CD8-positive, alpha-beta T cell (primary cell): ENCODE measurements at regions of chr19 and their contacts with region 1.

Region 1: GRCh38 chr19:49929611-49930482 is 543 bp upstream of the NUP62 start:
- DNase-seq: peak; percentile 83 to 98 (median 91)
- ATAC-seq: peak; percentile 89
- H3K4me3 ChIP-seq: peak overlapping the region; percentile 90 to 100
- H3K4me3 Mint-ChIP-seq: peak overlapping the region; percentile 98
- H3K27ac ChIP-seq: peak overlapping the region; percentile 83 to 97
- H3K27ac Mint-ChIP-seq: peak overlapping the region; percentile 96
- H3K4me1 ChIP-seq: peaks cover 35% of the 10 kb centered on the region
- H3K4me1 Mint-ChIP-seq: peaks cover 65% of the 10 kb centered on the region
- H3K27me3 ChIP-seq: no peaks in the 10 kb centered on the region
- H3K27me3 Mint-ChIP-seq: no peaks in the 10 kb centered on the region
- CTCF ChIP-seq: no peak

Region 2: DNA sequence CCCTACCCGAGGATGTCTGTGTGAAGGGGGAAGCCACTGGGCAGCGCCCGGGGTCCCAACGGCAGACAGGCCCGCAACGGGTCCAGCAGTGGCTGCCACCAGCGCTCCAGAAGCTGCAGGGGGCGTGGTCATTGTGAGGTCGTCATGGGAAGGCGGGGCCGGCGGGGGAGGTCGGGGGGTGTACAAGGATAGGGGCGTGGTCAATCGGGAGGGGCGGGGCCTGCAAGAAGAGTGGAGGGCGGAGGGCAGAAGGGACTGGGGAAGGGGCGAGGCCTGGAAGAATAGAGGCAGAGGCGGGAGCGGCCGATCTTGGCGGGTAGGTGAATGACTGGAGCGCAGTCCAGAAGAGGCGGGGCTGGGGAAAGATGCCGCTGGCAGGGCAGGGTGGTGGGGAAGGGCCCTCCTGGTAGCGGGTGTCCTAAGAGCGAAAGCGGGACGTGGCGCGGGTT is 121.1 kb before region 1 on chr19:
- CTCF ChIA-PET with region 1: no interaction called
- POLR2A ChIA-PET with region 1: no interaction called
- intact Hi-C with region 1: loop called (anchors 1 to 2 kb)
- DNase-seq: peak; percentile 64 to 89 (median 86)
- ATAC-seq: peak; percentile 61
- H3K4me3 ChIP-seq: peak overlapping the region; percentile 59 to 65
- H3K4me3 Mint-ChIP-seq: peak overlapping the region; percentile 84
- H3K27ac ChIP-seq: peak overlapping the region; percentile 44 to 53
- H3K27ac Mint-ChIP-seq: peak overlapping the region; percentile 27
- H3K4me1 ChIP-seq: peaks cover 21% of the 10 kb centered on the region
- H3K4me1 Mint-ChIP-seq: peaks cover 31% of the 10 kb centered on the region
- H3K27me3 ChIP-seq: no peaks in the 10 kb centered on the region
- H3K27me3 Mint-ChIP-seq: no peaks in the 10 kb centered on the region
- CTCF ChIP-seq: no peak

Region 3: GRCh38 chr19:49869441-49870176 is 60.2 kb before region 1 on chr19:
- CTCF ChIA-PET with region 1: no interaction called
- POLR2A ChIA-PET with region 1: no interaction called
- intact Hi-C with region 1: loop called in 1 of 2 experiments (anchors 1 kb)
- DNase-seq: peak; percentile 81 to 98 (median 89)
- ATAC-seq: peak; percentile 75
- H3K4me3 ChIP-seq: peak overlapping the region; percentile 73 to 85
- H3K4me3 Mint-ChIP-seq: no peak overlapping the region
- H3K27ac ChIP-seq: peak overlapping the region; percentile 64 to 96
- H3K27ac Mint-ChIP-seq: no peak overlapping the region
- H3K4me1 ChIP-seq: peaks cover 36% of the 10 kb centered on the region
- H3K4me1 Mint-ChIP-seq: peaks cover 41% of the 10 kb centered on the region
- H3K27me3 ChIP-seq: no peaks in the 10 kb centered on the region
- H3K27me3 Mint-ChIP-seq: no peaks in the 10 kb centered on the region
- CTCF ChIP-seq: no peak

Region 4: GRCh38 chr19:49946418-49946817 is 16.6 kb after region 1 on chr19:
- CTCF ChIA-PET with region 1: no interaction called
- POLR2A ChIA-PET with region 1: no interaction called
- intact Hi-C with region 1: no loop called
- DNase-seq: no peak
- ATAC-seq: no peak
- H3K4me3 ChIP-seq: no peak overlapping the region
- H3K4me3 Mint-ChIP-seq: no peak overlapping the region
- H3K27ac ChIP-seq: no peak overlapping the region
- H3K27ac Mint-ChIP-seq: no peak overlapping the region
- H3K4me1 ChIP-seq: no peaks in the 10 kb centered on the region
- H3K4me1 Mint-ChIP-seq: no peaks in the 10 kb centered on the region
- H3K27me3 ChIP-seq: peaks cover 0 to 2% of the 10 kb centered on the region in 2 experiments
- H3K27me3 Mint-ChIP-seq: peaks cover 26% of the 10 kb centered on the region
- CTCF ChIP-seq: no peak

Region 5: GRCh38 chr19:49983645-49984229 is 53.9 kb after region 1 on chr19:
- CTCF ChIA-PET with region 1: interaction called, 11 read pairs
- POLR2A ChIA-PET with region 1: no interaction called
- intact Hi-C with region 1: no loop called
- DNase-seq: peak; percentile 57 to 85 (median 77)
- ATAC-seq: peak; percentile 67
- H3K4me3 ChIP-seq: no peak overlapping the region
- H3K4me3 Mint-ChIP-seq: no peak overlapping the region
- H3K27ac ChIP-seq: no peak overlapping the region
- H3K27ac Mint-ChIP-seq: no peak overlapping the region
- H3K4me1 ChIP-seq: no peaks in the 10 kb centered on the region
- H3K4me1 Mint-ChIP-seq: no peaks in the 10 kb centered on the region
- H3K27me3 ChIP-seq: no peaks in the 10 kb centered on the region
- H3K27me3 Mint-ChIP-seq: no peaks in the 10 kb centered on the region
- CTCF ChIP-seq: peak; percentile 81

Region 6: GRCh38 chr19:50050384-50051224 is 120.8 kb after region 1 on chr19:
- CTCF ChIA-PET with region 1: no interaction called
- POLR2A ChIA-PET with region 1: no interaction called
- intact Hi-C with region 1: loop called in 1 of 2 experiments (anchors 2 kb)
- DNase-seq: peak; percentile 66 to 92 (median 80)
- ATAC-seq: peak; percentile 88
- H3K4me3 ChIP-seq: peak overlapping the region; percentile 58 to 64
- H3K4me3 Mint-ChIP-seq: peak overlapping the region; percentile 90
- H3K27ac ChIP-seq: peak overlapping the region; percentile 74 to 77
- H3K27ac Mint-ChIP-seq: peak overlapping the region; percentile 85
- H3K4me1 ChIP-seq: peaks cover 8% of the 10 kb centered on the region
- H3K4me1 Mint-ChIP-seq: peaks cover 17% of the 10 kb centered on the region
- H3K27me3 ChIP-seq: no peaks in the 10 kb centered on the region
- H3K27me3 Mint-ChIP-seq: peaks cover 5% of the 10 kb centered on the region
- CTCF ChIP-seq: no peak